ENCODE measurements at regions of chr17 and their contacts with region 1.

Region 1: GRCh38 chr17:69327060-69327831 is at the start of gene ABCA5:
- DNase-seq: peak; percentile 85 to 91 (median 89)
- ATAC-seq: peak; percentile 97
- H3K4me3 ChIP-seq: peak within 1 kb of the TSS; percentile 85
- H3K4me3 Mint-ChIP-seq: peak within 1 kb of the TSS; percentile 90 to 97 (median 95)
- H3K27ac ChIP-seq: peak within 1 kb of the TSS; percentile 76
- H3K27ac Mint-ChIP-seq: peak within 1 kb of the TSS; percentile 96 to 99 (median 98)
- H3K4me1 ChIP-seq: peaks cover 9 to 10% of the 10 kb centered on the region in 2 donors
- H3K4me1 Mint-ChIP-seq: peaks cover 17 to 39% (median 32%) of the 10 kb centered on the region in 7 donors
- H3K27me3 ChIP-seq: no peaks in the 10 kb centered on the region
- H3K27me3 Mint-ChIP-seq: peaks cover 0 to 10% (median 4%) of the 10 kb centered on the region in 5 donors
- total RNA-seq, gene ABCA5: 29.6 to 49.9 (median 41.3) TPM

Region 2: GRCh38 chr17:67993596-67994361 is 1333.5 kb before region 1 on chr17:
- CTCF ChIA-PET with region 1: no interaction called
- POLR2A ChIA-PET with region 1: no interaction called
- intact Hi-C with region 1: loop called (anchors 1 to 5 kb)
- DNase-seq: peak in 3 of 9 donors; percentile 13 to 29 (median 22)
- ATAC-seq: peak; percentile 89
- H3K4me3 ChIP-seq: peak overlapping the region; percentile 50
- H3K4me3 Mint-ChIP-seq: peak overlapping the region; percentile 74 to 95 (median 86)
- H3K27ac ChIP-seq: peak overlapping the region; percentile 51
- H3K27ac Mint-ChIP-seq: peak overlapping the region in 8 of 9 donors; percentile 38 to 86 (median 54)
- H3K4me1 ChIP-seq: peaks cover 19 to 24% of the 10 kb centered on the region in 2 donors
- H3K4me1 Mint-ChIP-seq: peaks cover 21 to 38% (median 32%) of the 10 kb centered on the region in 7 donors
- H3K27me3 ChIP-seq: peaks cover 0 to 7% of the 10 kb centered on the region in 2 donors
- H3K27me3 Mint-ChIP-seq: peaks cover 5 to 38% (median 21%) of the 10 kb centered on the region in 5 donors

Region 3: DNA sequence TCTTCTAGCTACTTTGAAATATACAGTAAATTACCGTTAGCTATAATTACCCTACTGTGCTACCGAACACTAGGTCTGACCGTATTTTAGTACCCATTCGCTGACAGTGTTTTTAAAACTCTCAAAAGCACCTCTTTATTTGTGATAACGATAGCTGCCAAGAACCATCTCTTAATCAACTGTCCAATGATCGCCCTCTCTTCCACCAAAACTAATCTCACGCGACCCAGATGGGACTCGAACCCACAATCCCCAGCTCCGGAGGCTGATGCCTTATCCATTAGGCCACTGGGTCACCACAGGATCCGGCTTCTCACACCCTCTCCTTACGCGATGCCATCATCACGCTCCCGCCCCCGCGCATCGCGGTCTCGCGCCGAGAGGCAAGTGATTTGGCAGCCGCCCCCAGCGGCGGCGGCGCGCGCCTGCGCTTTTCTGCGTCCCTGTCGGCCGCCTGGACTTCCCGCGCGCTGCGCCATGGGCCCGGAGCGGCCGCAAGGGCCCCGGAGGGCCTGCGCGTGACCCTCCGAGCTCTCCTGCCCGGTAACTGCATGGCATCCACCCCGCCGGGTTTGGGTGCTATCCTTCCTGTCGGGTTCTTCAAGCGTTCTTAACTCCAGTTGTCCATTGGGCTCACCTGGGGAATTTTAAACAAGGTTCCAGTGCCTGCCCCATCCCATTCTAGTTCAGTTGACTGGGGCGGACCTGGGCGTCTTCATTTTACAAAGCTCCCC is 1307.4 kb before region 1 on chr17:
- CTCF ChIA-PET with region 1: no interaction called
- POLR2A ChIA-PET with region 1: no interaction called
- intact Hi-C with region 1: loop called in 1 of 2 experiments (anchors 5 kb)
- DNase-seq: peak; percentile 88 to 100 (median 94)
- ATAC-seq: peak; percentile 96
- H3K4me3 ChIP-seq: peak overlapping the region; percentile 79
- H3K4me3 Mint-ChIP-seq: peak overlapping the region; percentile 85 to 95 (median 89)
- H3K27ac ChIP-seq: peak overlapping the region; percentile 79
- H3K27ac Mint-ChIP-seq: peak overlapping the region; percentile 89 to 100 (median 98)
- H3K4me1 ChIP-seq: peaks cover 6 to 10% of the 10 kb centered on the region in 2 donors
- H3K4me1 Mint-ChIP-seq: peaks cover 10 to 25% (median 17%) of the 10 kb centered on the region in 7 donors
- H3K27me3 ChIP-seq: no peaks in the 10 kb centered on the region
- H3K27me3 Mint-ChIP-seq: peaks cover 0 to 9% (median 0%) of the 10 kb centered on the region in 5 donors

Region 4: GRCh38 chr17:68512247-68512982 is 814.8 kb before region 1 on chr17 and contains the start of gene PRKAR1A:
- CTCF ChIA-PET with region 1: no interaction called
- POLR2A ChIA-PET with region 1: no interaction called
- intact Hi-C with region 1: loop called (anchors 1 kb)
- DNase-seq: peak; percentile 84 to 96 (median 94)
- ATAC-seq: peak; percentile 92
- H3K4me3 ChIP-seq: peak within 1 kb of the TSS; percentile 97
- H3K4me3 Mint-ChIP-seq: peak within 1 kb of the TSS; percentile 89 to 100 (median 100)
- H3K27ac ChIP-seq: peak within 1 kb of the TSS; percentile 98
- H3K27ac Mint-ChIP-seq: peak within 1 kb of the TSS; percentile 91 to 100 (median 100)
- H3K4me1 ChIP-seq: peaks cover 13 to 22% of the 10 kb centered on the region in 2 donors
- H3K4me1 Mint-ChIP-seq: peaks cover 34 to 74% (median 51%) of the 10 kb centered on the region in 7 donors
- H3K27me3 ChIP-seq: no peaks in the 10 kb centered on the region
- H3K27me3 Mint-ChIP-seq: no peaks in the 10 kb centered on the region
- total RNA-seq, gene PRKAR1A: 115 to 224 (median 156) TPM

Region 5: DNA sequence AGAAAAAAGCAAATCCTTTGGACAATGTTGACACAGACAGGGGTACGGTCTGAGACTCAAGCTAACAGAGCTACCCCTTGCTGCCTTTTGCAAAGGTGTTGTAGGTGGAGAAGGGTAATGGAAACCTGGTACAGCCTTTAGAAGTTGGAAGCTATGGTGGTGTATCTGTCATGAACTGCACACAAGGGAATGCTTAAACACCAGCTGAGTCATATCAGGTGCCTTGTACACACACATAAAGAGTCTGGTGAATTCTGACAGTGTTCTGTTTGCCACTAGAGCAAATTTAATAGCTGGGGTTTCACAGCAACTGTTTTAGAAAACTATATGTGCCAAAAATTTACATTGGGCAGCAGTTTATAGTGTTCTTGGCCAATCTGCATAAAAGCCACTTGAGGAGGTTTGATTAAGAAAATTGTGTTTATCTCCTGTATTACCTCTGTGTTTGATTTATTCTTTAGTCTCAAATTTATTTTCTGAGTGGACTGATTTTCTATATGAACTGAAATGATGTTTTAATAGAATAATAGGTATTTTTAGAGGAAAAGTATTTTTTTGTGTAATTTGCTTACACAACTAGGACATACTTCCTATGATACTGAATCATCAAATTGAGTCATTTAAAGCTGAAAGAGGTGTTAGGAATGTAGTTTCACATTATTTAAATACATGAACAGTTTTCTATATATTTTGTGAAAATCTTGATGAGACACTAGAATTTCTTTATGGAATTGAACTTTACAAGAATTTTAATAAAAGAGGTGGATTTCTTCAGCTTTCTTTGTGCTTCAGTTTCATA is 224.2 kb after region 1 on chr17:
- CTCF ChIA-PET with region 1: no interaction called
- POLR2A ChIA-PET with region 1: no interaction called
- intact Hi-C with region 1: no loop called
- DNase-seq: no peak
- ATAC-seq: no peak
- H3K4me3 ChIP-seq: no peak overlapping the region
- H3K4me3 Mint-ChIP-seq: no peak overlapping the region
- H3K27ac ChIP-seq: no peak overlapping the region
- H3K27ac Mint-ChIP-seq: no peak overlapping the region
- H3K4me1 ChIP-seq: no peaks in the 10 kb centered on the region
- H3K4me1 Mint-ChIP-seq: no peaks in the 10 kb centered on the region
- H3K27me3 ChIP-seq: no peaks in the 10 kb centered on the region
- H3K27me3 Mint-ChIP-seq: no peaks in the 10 kb centered on the region